SK-N-SH (cell line): ENCODE measurements at regions of chr5 and their contacts with region 1.

Region 1: GRCh38 chr5:93800988-93801811 is 59.8 kb upstream of the POU5F2 start:
- DNase-seq: peak; percentile 26
- H3K4me3 ChIP-seq: 0 out of 4 replicates have a peak overlapping the region, but pooled peaks of 1 of the 2 experiments have one; percentile 3
- H3K27ac ChIP-seq: peak overlapping the region in 1 of 2 experiments; percentile 12; a peak in 2 of 4 replicates
- H3K4me1 ChIP-seq: peaks cover 0 to 6% of the 10 kb centered on the region in 2 experiments; a peak in 2 of 4 replicates
- H3K27me3 ChIP-seq: no peaks in the 10 kb centered on the region
- CTCF ChIP-seq: peak; percentile 79
- EP300 ChIP-seq: no peak
- RAD21 ChIP-seq: peak; percentile 86

Region 2: GRCh38 chr5:93582677-93583438 is 218.3 kb before region 1 on chr5 and contains the start of gene NR2F1:
- CTCF ChIA-PET with region 1: interaction called, 16 read pairs
- POLR2A ChIA-PET with region 1: interaction called, 4 read pairs
- DNase-seq: peak; percentile 80
- H3K4me3 ChIP-seq: peak within 1 kb of the TSS; percentile 74 to 87
- H3K27ac ChIP-seq: peak within 1 kb of the TSS; percentile 92
- H3K4me1 ChIP-seq: peaks cover 5 to 6% of the 10 kb centered on the region in 2 experiments; a peak in 3 of 4 replicates
- H3K27me3 ChIP-seq: no peaks in the 10 kb centered on the region
- CTCF ChIP-seq: peak; percentile 27; the same call in 1 of the 2 replicates
- EP300 ChIP-seq: peak; percentile 49 to 66; a peak in 3 of 4 replicates
- RAD21 ChIP-seq: no peak; the same call in 1 of the 2 replicates
- polyA plus RNA-seq, gene NR2F1: 40.0 and 47.1 TPM in 2 replicates

Region 3: DNA sequence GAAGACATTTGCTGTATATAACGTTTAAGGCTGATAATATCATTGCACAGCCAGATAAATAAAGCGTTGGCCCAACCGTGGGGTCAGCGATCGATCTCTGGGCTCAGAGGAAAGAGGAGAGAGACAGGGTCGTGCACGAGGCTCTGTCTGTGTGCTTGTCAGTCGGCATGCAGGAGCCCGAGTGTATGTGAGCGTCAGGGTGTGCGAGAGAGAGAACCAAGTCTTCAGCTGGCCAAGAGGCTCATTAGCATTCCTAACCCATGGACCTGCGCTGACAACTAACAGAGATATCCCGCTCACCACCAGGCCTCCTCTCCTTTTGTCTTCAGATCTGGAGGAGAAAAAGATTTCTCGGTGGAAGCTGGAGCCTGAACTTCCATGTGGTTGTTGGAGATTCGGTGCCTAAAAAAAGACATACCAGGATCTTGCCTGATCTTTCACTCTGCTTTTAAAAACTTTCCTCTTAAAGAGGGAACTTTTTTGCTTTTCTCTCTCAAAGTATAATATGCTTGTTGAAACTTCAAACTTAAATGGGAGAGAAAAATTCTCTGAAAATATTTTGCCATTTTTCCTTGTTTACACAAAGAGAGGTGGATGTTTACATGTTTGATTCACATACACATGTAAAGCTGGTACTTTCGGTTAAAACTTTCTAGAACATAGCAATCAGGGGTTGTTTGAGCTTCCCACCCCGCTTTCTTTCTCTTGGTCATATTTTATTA is 201.6 kb before region 1 on chr5:
- CTCF ChIA-PET with region 1: interaction called, 29 read pairs
- POLR2A ChIA-PET with region 1: no interaction called
- DNase-seq: peak; percentile 44
- H3K4me3 ChIP-seq: no peak overlapping the region; a peak in 1 of 4 replicates
- H3K27ac ChIP-seq: peak overlapping the region; percentile 61 to 94
- H3K4me1 ChIP-seq: peaks cover 6 to 20% of the 10 kb centered on the region in 2 experiments; a peak in 2 of 4 replicates
- H3K27me3 ChIP-seq: no peaks in the 10 kb centered on the region
- CTCF ChIP-seq: no peak
- EP300 ChIP-seq: no peak
- RAD21 ChIP-seq: no peak

Region 4: GRCh38 chr5:93620487-93621326 is 180.5 kb before region 1 on chr5:
- CTCF ChIA-PET with region 1: interaction called, 33 read pairs
- POLR2A ChIA-PET with region 1: no interaction called
- DNase-seq: peak; percentile 94
- H3K4me3 ChIP-seq: peak overlapping the region; percentile 71 to 85
- H3K27ac ChIP-seq: peak overlapping the region; percentile 86 to 97
- H3K4me1 ChIP-seq: peaks cover 0 to 4% of the 10 kb centered on the region in 2 experiments; a peak in 2 of 4 replicates
- H3K27me3 ChIP-seq: no peaks in the 10 kb centered on the region
- CTCF ChIP-seq: peak; percentile 22
- EP300 ChIP-seq: 0 out of 4 replicates have a peak, but pooled peaks of 1 of the 2 experiments have one; percentile 21
- RAD21 ChIP-seq: peak; percentile 60

Region 5: GRCh38 chr5:93819666-93820065 is 18.5 kb after region 1 on chr5:
- CTCF ChIA-PET with region 1: interaction called, 10 read pairs
- POLR2A ChIA-PET with region 1: no interaction called
- DNase-seq: no peak
- H3K4me3 ChIP-seq: no peak overlapping the region
- H3K27ac ChIP-seq: no peak overlapping the region
- H3K4me1 ChIP-seq: peaks cover 0 to 3% of the 10 kb centered on the region in 2 experiments; a peak in 2 of 4 replicates
- H3K27me3 ChIP-seq: no peaks in the 10 kb centered on the region
- CTCF ChIP-seq: no peak
- EP300 ChIP-seq: no peak
- RAD21 ChIP-seq: no peak

Region 6: DNA sequence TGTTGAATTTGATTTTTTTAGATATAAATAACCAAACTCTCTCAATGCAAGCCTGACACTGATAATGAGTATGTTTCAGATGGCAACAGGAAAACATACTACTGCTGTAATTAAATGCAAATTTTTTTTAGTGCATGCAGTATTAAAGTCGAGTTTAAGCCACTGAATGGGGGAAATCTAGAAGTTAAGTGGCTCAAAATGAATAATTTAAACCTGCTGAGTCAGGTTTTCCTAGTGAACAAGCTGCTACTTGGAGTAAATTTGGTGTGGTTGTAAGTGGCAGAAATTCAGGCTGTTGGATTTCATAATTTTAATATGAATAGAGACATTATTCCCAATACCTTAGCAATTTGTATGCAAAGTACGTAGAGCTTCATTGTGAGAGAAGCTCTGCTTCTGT is 939.1 kb after region 1 on chr5:
- CTCF ChIA-PET with region 1: interaction called, 11 read pairs
- POLR2A ChIA-PET with region 1: no interaction called
- DNase-seq: no peak
- H3K4me3 ChIP-seq: no peak overlapping the region
- H3K27ac ChIP-seq: no peak overlapping the region
- H3K4me1 ChIP-seq: no peaks in the 10 kb centered on the region
- H3K27me3 ChIP-seq: no peaks in the 10 kb centered on the region
- CTCF ChIP-seq: no peak
- EP300 ChIP-seq: no peak
- RAD21 ChIP-seq: no peak